ENCODE measurements at regions of chr19 and their contacts with region 1.

Region 1: DNA sequence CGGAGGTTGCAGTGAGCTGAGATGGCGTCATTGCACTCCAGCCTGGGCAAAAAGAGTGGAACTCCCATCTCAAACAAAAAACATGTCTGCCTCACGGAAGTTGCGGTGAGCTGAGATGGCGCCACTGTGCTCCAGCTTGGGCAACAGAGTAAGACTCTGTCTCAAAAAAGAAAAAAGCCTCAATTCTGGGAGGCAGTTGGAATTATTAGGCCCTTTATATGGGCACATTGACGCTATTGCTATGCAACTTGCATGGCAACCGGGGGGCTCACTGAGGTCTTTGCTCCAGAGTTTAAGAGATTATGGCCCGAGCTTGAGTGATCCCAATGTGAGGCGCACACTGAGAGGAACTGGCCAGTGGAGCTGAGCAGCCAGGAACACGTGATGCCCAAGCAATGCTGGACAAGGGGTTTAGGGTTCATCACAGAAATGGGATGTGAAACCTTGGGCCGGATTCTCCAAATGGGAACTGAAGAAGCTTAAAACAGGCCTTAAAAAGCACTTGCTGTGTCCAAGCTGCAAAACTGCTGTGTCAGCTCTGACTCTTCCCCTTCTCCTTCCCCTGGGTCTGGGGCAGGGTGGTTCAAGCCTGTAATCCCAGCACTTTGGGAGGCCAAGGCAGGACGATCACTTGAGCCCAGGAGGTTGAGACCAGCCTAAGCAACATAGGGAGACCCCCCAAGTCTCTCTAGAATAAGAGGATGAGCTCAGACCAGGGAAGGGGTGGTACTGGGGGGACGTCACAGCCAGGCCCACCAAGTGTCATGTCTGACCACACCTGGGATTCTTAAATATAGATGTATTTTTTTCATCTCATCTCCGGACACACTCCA is 2.5 kb downstream of the FTL start:
- DNase-seq: no peak
- ATAC-seq: no peak
- H3K4me3 ChIP-seq: no peak overlapping the region
- H3K27ac ChIP-seq: no peak overlapping the region
- H3K4me1 ChIP-seq: peaks cover 26% of the 10 kb centered on the region
- H3K27me3 ChIP-seq: no peaks in the 10 kb centered on the region
- CTCF ChIP-seq: no peak

Region 2: DNA sequence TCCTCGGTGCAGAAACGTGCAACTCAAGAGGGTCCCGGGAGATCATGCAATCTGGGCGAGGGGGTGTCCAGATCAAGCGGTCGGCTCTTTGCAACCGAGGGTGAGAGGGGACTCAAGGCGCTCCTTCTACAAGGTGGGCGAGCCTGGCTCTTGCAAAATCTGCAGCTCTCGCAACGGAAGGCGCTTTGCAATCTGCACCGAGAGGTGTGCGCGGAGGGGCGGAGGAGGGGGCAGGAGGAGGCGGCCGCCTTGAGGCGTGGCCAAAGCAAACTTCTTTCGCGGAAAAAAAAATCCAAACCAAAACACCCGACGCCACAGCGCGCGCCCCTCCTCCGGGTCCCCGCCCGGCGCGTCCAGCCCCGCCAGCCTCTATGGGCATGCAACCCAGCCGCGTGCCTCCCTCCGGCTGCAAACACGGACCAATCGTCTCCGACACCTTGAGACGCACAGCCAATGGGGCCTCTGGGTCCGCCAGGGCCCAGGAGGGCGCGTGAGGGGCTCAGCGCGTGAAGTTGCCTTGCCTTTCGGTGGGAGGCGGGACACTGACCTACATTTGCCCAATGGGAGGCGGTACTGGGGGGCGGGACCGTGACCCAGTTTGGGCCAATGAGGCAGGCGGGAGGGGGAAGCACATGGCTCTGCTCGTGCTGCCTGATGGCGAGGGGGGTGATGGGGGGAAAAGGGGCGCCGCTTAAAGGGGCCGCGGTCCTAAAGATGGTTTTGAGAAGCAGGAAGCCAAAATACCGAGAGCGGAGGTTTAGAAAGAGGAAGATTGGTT is 330.2 kb before region 1 on chr19 and contains the start of gene DBP:
- CTCF ChIA-PET with region 1: no interaction called
- POLR2A ChIA-PET with region 1: no interaction called
- intact Hi-C with region 1: no loop called
- DNase-seq: peak; percentile 96
- ATAC-seq: peak; percentile 71
- H3K4me3 ChIP-seq: peak within 1 kb of the TSS; percentile 80
- H3K27ac ChIP-seq: peak within 1 kb of the TSS; percentile 67
- H3K4me1 ChIP-seq: peaks cover 24% of the 10 kb centered on the region
- H3K27me3 ChIP-seq: no peaks in the 10 kb centered on the region
- CTCF ChIP-seq: no peak
- total RNA-seq, gene DBP: 9.0 and 12.2 TPM in 2 replicates

Region 3: GRCh38 chr19:49097455-49098288 is 130.1 kb after region 1 on chr19:
- CTCF ChIA-PET with region 1: no interaction called
- POLR2A ChIA-PET with region 1: no interaction called
- intact Hi-C with region 1: no loop called
- DNase-seq: peak; percentile 88
- ATAC-seq: peak; percentile 98
- H3K4me3 ChIP-seq: no peak overlapping the region
- H3K27ac ChIP-seq: peak overlapping the region; percentile 36
- H3K4me1 ChIP-seq: peaks cover 8% of the 10 kb centered on the region
- H3K27me3 ChIP-seq: no peaks in the 10 kb centered on the region
- CTCF ChIP-seq: peak; percentile 94

Region 4: GRCh38 chr19:49148784-49149651 is 181.5 kb after region 1 on chr19:
- CTCF ChIA-PET with region 1: no interaction called
- POLR2A ChIA-PET with region 1: interaction called, 18 read pairs
- intact Hi-C with region 1: no loop called
- DNase-seq: peak; percentile 99
- ATAC-seq: peak; percentile 70
- H3K4me3 ChIP-seq: peak overlapping the region; percentile 71
- H3K27ac ChIP-seq: peak overlapping the region; percentile 44; the same call in 1 of the 2 replicates
- H3K4me1 ChIP-seq: peaks cover 25% of the 10 kb centered on the region
- H3K27me3 ChIP-seq: no peaks in the 10 kb centered on the region
- CTCF ChIP-seq: no peak